Activated CD4-positive, alpha-beta T cell treated with anti-CD3 and anti-CD28 coated beads, Interleukin-2, amount 10 ng/mL, durations not matched to agents 24 days and 14 days (primary cell): ENCODE measurements at regions of chr18 and their contacts with region 1.

Region 1: GRCh38 chr18:45212181-45213039 is 402.9 kb upstream of the SLC14A2 start:
- DNase-seq: peak; percentile 92
- H3K4me3 Mint-ChIP-seq: no peak overlapping the region
- H3K27ac Mint-ChIP-seq: no peak overlapping the region
- H3K4me1 Mint-ChIP-seq: no peaks in the 10 kb centered on the region
- H3K27me3 Mint-ChIP-seq: no peaks in the 10 kb centered on the region

Region 2: GRCh38 chr18:43620936-43621335 is 1591.5 kb before region 1 on chr18:
- intact Hi-C with region 1: loop called (anchors 2 kb)
- DNase-seq: no peak
- H3K4me3 Mint-ChIP-seq: no peak overlapping the region
- H3K27ac Mint-ChIP-seq: no peak overlapping the region
- H3K4me1 Mint-ChIP-seq: no peaks in the 10 kb centered on the region
- H3K27me3 Mint-ChIP-seq: no peaks in the 10 kb centered on the region

Region 3: DNA sequence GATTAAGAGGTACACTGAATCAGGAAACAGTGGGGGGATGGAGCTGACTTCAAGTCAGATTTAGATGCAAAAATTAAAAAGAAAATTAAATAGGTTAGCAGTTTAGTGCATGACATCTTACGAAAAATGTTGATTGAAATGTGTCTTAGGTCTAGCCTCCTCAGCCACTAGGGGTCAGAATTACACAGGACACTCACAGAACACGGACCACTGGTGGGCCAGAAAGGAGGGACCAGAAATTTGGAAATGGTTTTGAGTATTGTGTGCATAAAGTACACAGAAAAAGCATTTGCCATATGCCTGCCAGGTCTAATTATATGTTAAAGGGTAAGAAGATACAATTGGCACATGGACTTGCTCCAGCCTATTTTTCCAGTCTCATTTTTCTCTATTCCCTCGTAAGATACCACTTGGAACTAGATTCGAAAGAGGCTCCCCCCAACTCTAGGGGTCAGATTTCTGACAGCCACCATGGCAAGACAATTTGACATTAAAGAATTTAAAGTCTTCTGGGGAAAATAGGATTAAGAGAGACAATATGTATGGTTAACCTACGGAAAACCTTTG is 1082.0 kb before region 1 on chr18:
- intact Hi-C with region 1: loop called (anchors 2 kb)
- DNase-seq: no peak
- H3K4me3 Mint-ChIP-seq: no peak overlapping the region
- H3K27ac Mint-ChIP-seq: no peak overlapping the region
- H3K4me1 Mint-ChIP-seq: no peaks in the 10 kb centered on the region
- H3K27me3 Mint-ChIP-seq: no peaks in the 10 kb centered on the region

Region 4: GRCh38 chr18:44579028-44579702 is 633.2 kb before region 1 on chr18:
- intact Hi-C with region 1: loop called (anchors 1 kb)
- DNase-seq: peak; percentile 55
- H3K4me3 Mint-ChIP-seq: no peak overlapping the region
- H3K27ac Mint-ChIP-seq: no peak overlapping the region
- H3K4me1 Mint-ChIP-seq: no peaks in the 10 kb centered on the region
- H3K27me3 Mint-ChIP-seq: peaks cover 1% of the 10 kb centered on the region

Region 5: GRCh38 chr18:44895176-44895798 is 317.1 kb before region 1 on chr18:
- intact Hi-C with region 1: loop called (anchors 10 kb)
- DNase-seq: peak; percentile 73
- H3K4me3 Mint-ChIP-seq: no peak overlapping the region
- H3K27ac Mint-ChIP-seq: peak overlapping the region; percentile 53
- H3K4me1 Mint-ChIP-seq: peaks cover 41% of the 10 kb centered on the region
- H3K27me3 Mint-ChIP-seq: peaks cover 6% of the 10 kb centered on the region

Region 6: GRCh38 chr18:45260125-45260524 is 47.7 kb after region 1 on chr18:
- intact Hi-C with region 1: no loop called
- DNase-seq: no peak
- H3K4me3 Mint-ChIP-seq: no peak overlapping the region
- H3K27ac Mint-ChIP-seq: no peak overlapping the region
- H3K4me1 Mint-ChIP-seq: no peaks in the 10 kb centered on the region
- H3K27me3 Mint-ChIP-seq: no peaks in the 10 kb centered on the region

Region 7: DNA sequence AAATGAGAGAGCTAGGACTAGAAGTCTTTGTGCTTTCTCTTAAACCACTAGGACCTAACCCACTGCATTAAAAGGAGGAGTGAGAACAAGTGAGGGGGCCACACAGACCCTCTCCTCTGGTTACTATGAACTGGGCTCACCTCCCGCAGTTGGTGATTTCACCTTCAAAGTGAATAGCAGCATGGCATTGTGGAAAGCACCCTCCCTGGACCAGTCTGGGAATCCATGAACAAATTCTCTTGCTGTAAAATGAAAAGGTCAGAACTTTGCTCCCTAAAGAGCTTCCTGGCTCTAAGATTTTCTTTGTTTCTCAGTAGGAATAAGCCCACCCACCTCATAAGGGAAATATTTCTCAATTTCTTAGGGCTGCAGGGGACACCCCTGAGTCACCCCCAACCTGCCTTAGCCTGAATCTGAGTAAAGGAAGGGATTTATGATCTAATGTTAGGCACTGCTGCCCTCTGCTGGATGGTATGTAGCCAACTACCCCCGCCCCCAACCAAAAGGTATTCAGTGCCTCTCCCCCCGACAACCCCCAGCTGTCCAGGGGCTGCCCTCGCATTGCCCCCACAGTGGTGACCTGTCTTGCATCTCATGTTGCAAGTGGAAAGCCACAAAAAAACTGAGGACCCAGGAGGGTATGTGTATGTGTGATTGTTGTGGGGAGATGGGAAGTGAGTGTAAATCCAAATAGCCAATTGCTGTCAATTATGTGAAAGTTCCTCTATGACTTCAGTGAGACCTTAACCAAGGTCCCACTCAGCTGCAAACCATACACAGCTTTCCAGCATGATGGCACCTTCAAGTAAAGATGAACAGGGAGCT is 171.9 kb after region 1 on chr18:
- intact Hi-C with region 1: loop called (anchors 5 kb)
- DNase-seq: peak; percentile 79
- H3K4me3 Mint-ChIP-seq: no peak overlapping the region
- H3K27ac Mint-ChIP-seq: no peak overlapping the region
- H3K4me1 Mint-ChIP-seq: no peaks in the 10 kb centered on the region
- H3K27me3 Mint-ChIP-seq: peaks cover 15% of the 10 kb centered on the region

Region 8: DNA sequence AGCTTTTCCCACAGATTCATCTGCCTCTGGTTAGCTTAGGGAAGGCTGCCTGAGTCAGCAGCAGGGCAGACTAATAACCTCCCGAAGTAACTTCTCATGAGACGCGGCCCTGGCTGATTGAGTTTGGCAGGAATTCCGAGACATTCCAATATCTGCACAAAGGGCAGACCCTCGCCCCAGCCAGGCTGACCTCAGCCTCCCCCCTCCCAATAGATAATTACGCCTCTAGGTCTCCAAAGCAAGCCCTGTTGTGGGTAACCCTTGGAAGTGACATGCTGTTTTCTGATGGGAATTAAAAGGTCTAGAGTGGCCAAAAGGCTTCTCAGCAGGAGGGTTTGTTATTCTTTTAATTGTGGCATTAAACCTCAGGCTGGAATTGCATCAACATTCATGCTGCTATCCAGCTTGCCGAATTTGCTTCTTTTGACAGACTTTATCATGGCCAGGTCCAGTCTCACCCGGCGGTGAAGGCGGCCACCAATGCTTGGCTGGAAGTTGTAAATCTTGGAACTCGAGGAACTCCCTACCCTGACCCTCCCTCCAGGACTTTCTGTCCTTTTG is 304.9 kb after region 1 on chr18:
- intact Hi-C with region 1: no loop called
- DNase-seq: no peak
- H3K4me3 Mint-ChIP-seq: no peak overlapping the region
- H3K27ac Mint-ChIP-seq: no peak overlapping the region
- H3K4me1 Mint-ChIP-seq: no peaks in the 10 kb centered on the region
- H3K27me3 Mint-ChIP-seq: no peaks in the 10 kb centered on the region